ENCODE measurements at regions of chr6 and their contacts with region 1.

Region 1: GRCh38 chr6:110958329-110959192 is at the start of gene GTF3C6:
- DNase-seq: peak; percentile 93 to 94
- H3K4me3 ChIP-seq: peak within 1 kb of the TSS; percentile 15 to 57 (median 39)
- H3K27ac ChIP-seq: peak within 1 kb of the TSS; percentile 79 to 91 (median 85)
- H3K4me1 ChIP-seq: peaks cover 0 to 6% of the 10 kb centered on the region in 2 donors
- H3K27me3 ChIP-seq: no peaks in the 10 kb centered on the region
- CTCF ChIP-seq: peak in 1 of 6 experiments; percentile 1
- POLR2A ChIP-seq: peak; percentile 53 to 88
- total RNA-seq, gene GTF3C6: 16.0 to 49.8 (median 39.9) TPM

Region 2: GRCh38 chr6:110528101-110528929 is 430.2 kb before region 1 on chr6:
- intact Hi-C with region 1: loop called (anchors 10 kb)
- DNase-seq: peak; percentile 36 to 44
- H3K4me3 ChIP-seq: no peak overlapping the region
- H3K27ac ChIP-seq: no peak overlapping the region
- H3K4me1 ChIP-seq: no peaks in the 10 kb centered on the region
- H3K27me3 ChIP-seq: no peaks in the 10 kb centered on the region
- CTCF ChIP-seq: peak; percentile 35 to 82 (median 69)
- POLR2A ChIP-seq: no peak

Region 3: GRCh38 chr6:111162504-111162903 is 203.9 kb after region 1 on chr6:
- intact Hi-C with region 1: no loop called
- DNase-seq: no peak
- H3K4me3 ChIP-seq: no peak overlapping the region
- H3K27ac ChIP-seq: no peak overlapping the region
- H3K4me1 ChIP-seq: no peaks in the 10 kb centered on the region
- H3K27me3 ChIP-seq: no peaks in the 10 kb centered on the region
- CTCF ChIP-seq: no peak
- POLR2A ChIP-seq: no peak

Measured in thyroid gland (tissue), 4 donors.